Activated CD4-positive, alpha-beta memory T cell treated with anti-CD3 and anti-CD28 coated beads for 36 hours (primary cell): ENCODE measurements at regions of chr2 and their contacts with region 1.

Region 1: DNA sequence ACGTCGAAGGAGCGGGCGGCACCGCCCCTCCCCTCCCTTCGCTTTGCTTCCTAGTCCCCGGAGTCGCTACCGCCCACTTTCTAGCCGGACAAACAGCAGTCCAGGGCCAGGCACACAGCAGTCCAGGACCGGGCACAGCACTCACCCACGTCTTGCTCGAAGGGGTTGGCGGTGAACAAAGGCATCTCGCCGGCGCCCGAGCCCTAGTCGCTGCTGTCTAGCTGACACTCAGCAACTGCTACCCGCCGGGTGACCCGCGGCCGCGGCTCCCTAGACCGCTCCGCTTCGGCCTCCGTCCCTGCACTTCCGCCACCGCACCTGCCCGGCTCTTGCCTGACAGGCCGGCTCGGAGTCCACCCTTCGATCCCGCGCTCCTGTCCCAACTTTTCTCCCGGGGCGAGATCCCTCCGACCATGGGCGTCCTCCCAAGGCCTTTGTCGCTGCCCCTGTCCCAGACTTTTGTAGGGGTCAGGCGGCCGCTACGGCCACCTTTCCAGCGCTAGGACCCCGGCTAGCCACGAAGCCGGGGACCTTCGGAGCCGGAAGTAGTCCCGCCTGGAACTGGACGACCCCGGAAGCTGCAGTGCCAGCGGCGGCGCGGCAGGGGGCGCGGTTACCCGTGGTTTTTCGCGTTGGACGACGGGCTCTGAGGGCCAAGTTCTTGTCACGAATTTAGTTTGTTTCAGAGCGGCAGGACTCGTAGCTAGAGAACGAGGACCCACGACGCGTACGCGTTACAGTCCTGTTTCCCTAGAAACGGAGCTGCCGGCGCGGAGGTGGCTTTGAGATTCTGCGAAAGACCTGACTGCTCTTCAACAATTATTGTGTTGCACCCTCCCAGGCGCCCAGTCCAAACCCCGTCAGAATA is at the start of gene STAM2:
- DNase-seq: peak; percentile 96
- H3K4me3 Mint-ChIP-seq: peak within 1 kb of the TSS; percentile 96
- H3K27ac Mint-ChIP-seq: peak within 1 kb of the TSS; percentile 99
- H3K4me1 Mint-ChIP-seq: peaks cover 26% of the 10 kb centered on the region
- H3K27me3 Mint-ChIP-seq: peaks cover 3% of the 10 kb centered on the region
- total RNA-seq, gene STAM2: 16.4 to 17.6 TPM

Region 2: GRCh38 chr2:151828143-151828889 is 347.4 kb before region 1 on chr2 and contains the start of gene ARL5A:
- CTCF ChIA-PET with region 1: no interaction called
- POLR2A ChIA-PET with region 1: no interaction called
- intact Hi-C with region 1: loop called (anchors 5 kb)
- DNase-seq: peak; percentile 96
- H3K4me3 Mint-ChIP-seq: peak within 1 kb of the TSS; percentile 93
- H3K27ac Mint-ChIP-seq: peak within 1 kb of the TSS; percentile 79
- H3K4me1 Mint-ChIP-seq: peaks cover 43% of the 10 kb centered on the region
- H3K27me3 Mint-ChIP-seq: no peaks in the 10 kb centered on the region
- total RNA-seq, gene ARL5A: 54.6 to 63.2 TPM

Region 3: GRCh38 chr2:152062125-152063091 is 113.3 kb before region 1 on chr2:
- CTCF ChIA-PET with region 1: no interaction called
- POLR2A ChIA-PET with region 1: no interaction called
- intact Hi-C with region 1: no loop called
- DNase-seq: no peak
- H3K4me3 Mint-ChIP-seq: no peak overlapping the region
- H3K27ac Mint-ChIP-seq: no peak overlapping the region
- H3K4me1 Mint-ChIP-seq: no peaks in the 10 kb centered on the region
- H3K27me3 Mint-ChIP-seq: peaks cover 27% of the 10 kb centered on the region

Region 4: GRCh38 chr2:152097801-152098495 is 77.7 kb before region 1 on chr2:
- CTCF ChIA-PET with region 1: no interaction called
- POLR2A ChIA-PET with region 1: no interaction called
- intact Hi-C with region 1: loop called (anchors 5 kb)
- DNase-seq: no peak
- H3K4me3 Mint-ChIP-seq: peak overlapping the region; percentile 57
- H3K27ac Mint-ChIP-seq: no peak overlapping the region
- H3K4me1 Mint-ChIP-seq: peaks cover 19% of the 10 kb centered on the region
- H3K27me3 Mint-ChIP-seq: peaks cover 39% of the 10 kb centered on the region

Region 5: DNA sequence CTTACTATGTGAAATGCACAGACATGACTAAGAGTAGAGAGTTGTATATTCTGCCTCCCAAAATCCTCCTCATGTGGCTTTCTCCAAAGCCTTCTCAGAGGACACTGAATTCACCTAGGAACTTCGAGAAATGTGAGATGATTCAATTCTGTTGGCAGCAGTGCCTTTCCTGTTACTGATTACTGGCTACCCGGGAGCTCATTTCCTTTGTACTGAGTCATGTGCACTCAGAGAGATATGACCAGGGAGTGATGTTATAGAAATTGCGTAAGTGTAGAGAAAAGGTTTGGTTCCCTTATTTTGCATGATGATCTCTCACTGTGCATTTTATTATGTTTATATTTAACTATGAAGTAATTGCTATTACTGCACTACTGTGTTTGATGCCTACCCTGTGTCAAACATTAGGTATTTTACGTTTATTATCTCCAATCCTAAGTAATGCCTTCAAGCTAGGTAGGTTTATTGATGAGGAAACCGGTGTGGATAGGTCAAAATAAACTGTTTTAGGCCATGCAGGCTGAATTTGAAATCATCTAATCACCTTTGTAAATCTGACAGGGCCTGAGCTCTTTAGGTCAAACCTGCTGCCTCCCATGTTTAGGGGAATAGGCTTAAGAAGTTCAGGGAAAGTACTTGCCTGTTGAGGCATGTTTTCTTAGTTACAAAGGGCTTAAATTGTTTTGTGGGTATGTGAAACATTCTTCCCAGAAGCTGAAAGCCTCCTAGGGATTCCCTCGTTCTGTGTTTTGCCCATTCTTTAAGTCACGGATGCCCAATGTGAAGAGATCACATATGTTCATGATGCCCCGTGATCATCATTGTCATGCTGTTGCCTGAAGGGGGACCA is 246.1 kb after region 1 on chr2:
- CTCF ChIA-PET with region 1: no interaction called
- POLR2A ChIA-PET with region 1: no interaction called
- intact Hi-C with region 1: loop called (anchors 2 kb)
- DNase-seq: peak; percentile 15
- H3K4me3 Mint-ChIP-seq: no peak overlapping the region
- H3K27ac Mint-ChIP-seq: no peak overlapping the region
- H3K4me1 Mint-ChIP-seq: peaks cover 15% of the 10 kb centered on the region
- H3K27me3 Mint-ChIP-seq: peaks cover 29% of the 10 kb centered on the region

Region 6: GRCh38 chr2:152627351-152627957 is 451.8 kb after region 1 on chr2:
- CTCF ChIA-PET with region 1: interaction called, 7 read pairs
- POLR2A ChIA-PET with region 1: no interaction called
- intact Hi-C with region 1: loop called (anchors 2 kb)
- DNase-seq: no peak
- H3K4me3 Mint-ChIP-seq: no peak overlapping the region
- H3K27ac Mint-ChIP-seq: no peak overlapping the region
- H3K4me1 Mint-ChIP-seq: peaks cover 9% of the 10 kb centered on the region
- H3K27me3 Mint-ChIP-seq: peaks cover 4% of the 10 kb centered on the region

Region 7: GRCh38 chr2:152717228-152718075 is 541.8 kb after region 1 on chr2 and contains the start of gene PRPF40A:
- CTCF ChIA-PET with region 1: interaction called, 3 read pairs
- POLR2A ChIA-PET with region 1: interaction called, 3 read pairs
- intact Hi-C with region 1: loop called (anchors 1 kb)
- DNase-seq: peak; percentile 99
- H3K4me3 Mint-ChIP-seq: peak within 1 kb of the TSS; percentile 100
- H3K27ac Mint-ChIP-seq: peak within 1 kb of the TSS; percentile 100
- H3K4me1 Mint-ChIP-seq: peaks cover 61% of the 10 kb centered on the region
- H3K27me3 Mint-ChIP-seq: no peaks in the 10 kb centered on the region
- total RNA-seq, gene PRPF40A: 128 to 138 TPM